Activated naive CD4-positive, alpha-beta T cell treated with anti-CD3 and anti-CD28 coated beads for 36 hours (primary cell): ENCODE measurements at regions of chr5 and their contacts with region 1.

Region 1: DNA sequence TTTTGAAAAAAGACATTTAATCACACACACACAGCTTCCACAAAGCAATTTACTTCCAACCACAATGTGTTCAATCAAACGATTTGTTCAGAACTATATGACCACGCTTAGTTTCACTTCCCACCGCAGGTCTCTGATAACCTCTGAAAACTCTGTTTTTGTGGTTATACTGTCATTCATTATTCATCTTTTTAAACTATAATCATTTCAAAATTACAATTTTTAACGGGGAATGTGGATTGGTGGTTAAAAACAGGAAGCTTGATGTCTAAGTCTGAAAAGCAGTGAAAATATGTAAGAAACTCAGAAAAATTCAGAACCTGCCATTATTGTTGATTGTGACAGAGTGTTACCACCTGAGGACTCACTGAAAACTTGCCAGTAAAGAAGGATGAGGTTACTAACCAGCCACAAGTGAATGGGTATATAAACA is 12.7 kb upstream of the TMEM174 start:
- DNase-seq: peak; percentile 95
- H3K4me3 Mint-ChIP-seq: no peak overlapping the region
- H3K27ac Mint-ChIP-seq: no peak overlapping the region
- H3K4me1 Mint-ChIP-seq: peaks cover 36% of the 10 kb centered on the region
- H3K27me3 Mint-ChIP-seq: peaks cover 78% of the 10 kb centered on the region

Region 2: GRCh38 chr5:72268753-72269410 is 891.4 kb before region 1 on chr5:
- CTCF ChIA-PET with region 1: no interaction called
- intact Hi-C with region 1: no loop called
- DNase-seq: peak; percentile 58
- H3K4me3 Mint-ChIP-seq: no peak overlapping the region
- H3K27ac Mint-ChIP-seq: no peak overlapping the region
- H3K4me1 Mint-ChIP-seq: peaks cover 4% of the 10 kb centered on the region
- H3K27me3 Mint-ChIP-seq: no peaks in the 10 kb centered on the region

Region 3: DNA sequence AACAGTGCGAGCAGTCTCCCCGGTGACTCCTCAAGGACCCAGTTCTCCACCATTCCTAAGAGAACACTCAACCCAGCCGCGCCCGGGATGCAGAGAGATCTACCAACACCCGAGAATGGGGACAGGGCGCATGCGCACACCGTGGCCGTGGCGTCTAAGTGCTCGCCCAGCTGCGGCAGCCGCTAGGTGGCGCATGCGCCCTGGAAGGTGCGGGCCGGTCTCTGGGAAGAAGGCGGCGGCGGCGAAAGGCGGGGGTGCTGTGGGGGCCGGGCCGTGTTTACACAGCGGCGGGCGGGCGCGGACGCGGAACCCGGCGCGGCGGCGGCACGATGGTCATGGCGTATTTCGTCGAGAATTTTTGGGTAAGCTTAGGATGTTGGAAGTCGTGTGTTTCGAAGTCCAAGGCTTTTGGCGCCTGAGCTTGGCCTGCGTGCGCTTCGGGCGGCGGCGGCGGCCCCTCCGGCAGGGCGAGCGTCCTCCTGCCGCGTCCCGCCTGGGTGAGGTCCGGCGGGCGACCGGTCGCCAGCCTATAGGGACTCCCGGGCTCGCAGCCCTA is 204.4 kb before region 1 on chr5 and contains the start of gene FCHO2:
- CTCF ChIA-PET with region 1: no interaction called
- intact Hi-C with region 1: loop called (anchors 2 kb)
- DNase-seq: peak; percentile 95
- H3K4me3 Mint-ChIP-seq: peak within 1 kb of the TSS; percentile 91
- H3K27ac Mint-ChIP-seq: peak within 1 kb of the TSS; percentile 63
- H3K4me1 Mint-ChIP-seq: peaks cover 10% of the 10 kb centered on the region
- H3K27me3 Mint-ChIP-seq: peaks cover 47% of the 10 kb centered on the region
- total RNA-seq, gene FCHO2: 0.54 to 0.93 TPM

Region 4: DNA sequence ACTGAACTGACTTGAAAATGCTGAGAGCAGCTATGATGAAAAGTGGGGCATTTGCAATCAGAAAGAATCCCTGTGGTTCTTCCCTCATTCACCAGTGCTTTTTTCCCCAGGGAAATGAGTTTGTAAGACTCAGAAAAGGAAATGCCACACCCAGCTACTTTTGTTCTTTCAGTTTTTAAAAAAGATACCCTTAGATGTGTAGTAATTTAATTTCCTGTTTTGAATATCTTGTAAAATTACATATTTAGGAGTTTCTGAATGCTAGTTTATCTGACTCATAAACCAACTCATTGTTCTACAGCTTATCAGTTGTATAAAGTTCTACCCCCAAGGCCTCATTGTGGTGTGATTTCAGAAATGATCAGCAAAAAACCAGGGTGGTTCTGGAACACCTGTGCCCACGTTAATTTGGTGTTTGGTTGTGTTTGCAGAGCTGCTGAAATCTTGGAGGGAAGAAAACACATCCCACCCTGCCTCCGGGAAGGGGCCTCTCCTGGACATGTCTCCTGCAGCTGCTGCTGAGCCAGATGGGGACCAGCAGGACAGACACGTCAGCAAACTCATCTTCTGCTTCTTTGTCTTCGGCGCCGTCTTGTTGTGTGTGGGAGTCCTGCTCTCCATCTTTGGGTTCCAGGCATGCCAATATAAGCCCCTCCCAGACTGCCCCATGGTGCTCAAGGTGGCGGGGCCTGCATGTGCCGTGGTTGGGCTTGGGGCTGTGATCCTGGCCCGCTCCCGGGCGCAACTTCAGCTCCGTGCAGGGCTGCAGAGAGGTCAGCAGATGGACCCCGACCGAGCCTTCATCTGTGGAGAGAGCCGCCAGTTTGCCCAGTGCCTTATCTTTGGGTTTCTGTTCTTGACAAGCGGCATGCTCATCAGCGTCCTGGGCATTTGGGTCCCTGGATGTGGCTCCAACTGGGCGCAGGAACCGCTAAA is 37.1 kb before region 1 on chr5:
- CTCF ChIA-PET with region 1: no interaction called
- intact Hi-C with region 1: loop called (anchors 1 kb)
- DNase-seq: peak; percentile 18
- H3K4me3 Mint-ChIP-seq: no peak overlapping the region
- H3K27ac Mint-ChIP-seq: no peak overlapping the region
- H3K4me1 Mint-ChIP-seq: peaks cover 22% of the 10 kb centered on the region
- H3K27me3 Mint-ChIP-seq: peaks cover 60% of the 10 kb centered on the region

Region 5: GRCh38 chr5:73437101-73437776 is 277.0 kb after region 1 on chr5:
- CTCF ChIA-PET with region 1: no interaction called
- intact Hi-C with region 1: loop called (anchors 2 kb)
- DNase-seq: no peak
- H3K4me3 Mint-ChIP-seq: peak overlapping the region; percentile 56
- H3K27ac Mint-ChIP-seq: no peak overlapping the region
- H3K4me1 Mint-ChIP-seq: peaks cover 15% of the 10 kb centered on the region
- H3K27me3 Mint-ChIP-seq: peaks cover 78% of the 10 kb centered on the region

Region 6: GRCh38 chr5:74063821-74064220 is 903.6 kb after region 1 on chr5:
- CTCF ChIA-PET with region 1: no interaction called
- intact Hi-C with region 1: no loop called
- DNase-seq: no peak
- H3K4me3 Mint-ChIP-seq: no peak overlapping the region
- H3K27ac Mint-ChIP-seq: no peak overlapping the region
- H3K4me1 Mint-ChIP-seq: no peaks in the 10 kb centered on the region
- H3K27me3 Mint-ChIP-seq: peaks cover 7% of the 10 kb centered on the region